ENCODE measurements at regions of chr19 and their contacts with region 1.

Region 1: GRCh38 chr19:977058-977692 is 7.0 kb upstream of the WDR18 start:
- DNase-seq: no peak
- H3K4me3 ChIP-seq: no peak overlapping the region
- H3K27ac ChIP-seq: no peak overlapping the region
- H3K4me1 ChIP-seq: peaks cover 0 to 7% (median 3%) of the 10 kb centered on the region in 4 donors
- H3K27me3 ChIP-seq: peaks cover 0 to 16% (median 2%) of the 10 kb centered on the region in 4 donors
- CTCF ChIP-seq: no peak
- EP300 ChIP-seq: no peak
- POLR2A ChIP-seq: no peak

Region 2: GRCh38 chr19:940591-941291 is 36.4 kb before region 1 on chr19:
- intact Hi-C with region 1: loop called (anchors 5 kb)
- DNase-seq: no peak
- H3K4me3 ChIP-seq: peak overlapping the region; percentile 42 to 57 (median 44)
- H3K27ac ChIP-seq: peak overlapping the region; percentile 72 to 84 (median 79)
- H3K4me1 ChIP-seq: peaks cover 11 to 29% (median 24%) of the 10 kb centered on the region in 4 donors
- H3K27me3 ChIP-seq: no peaks in the 10 kb centered on the region
- CTCF ChIP-seq: peak in 1 of 3 experiments; percentile 14
- EP300 ChIP-seq: no peak
- POLR2A ChIP-seq: no peak

Measured in esophagus muscularis mucosa (tissue), 4 donors.